Mucosa of descending colon (tissue), 3 donors: ENCODE measurements at regions of chr15 and their contacts with region 1.

Region 1: DNA sequence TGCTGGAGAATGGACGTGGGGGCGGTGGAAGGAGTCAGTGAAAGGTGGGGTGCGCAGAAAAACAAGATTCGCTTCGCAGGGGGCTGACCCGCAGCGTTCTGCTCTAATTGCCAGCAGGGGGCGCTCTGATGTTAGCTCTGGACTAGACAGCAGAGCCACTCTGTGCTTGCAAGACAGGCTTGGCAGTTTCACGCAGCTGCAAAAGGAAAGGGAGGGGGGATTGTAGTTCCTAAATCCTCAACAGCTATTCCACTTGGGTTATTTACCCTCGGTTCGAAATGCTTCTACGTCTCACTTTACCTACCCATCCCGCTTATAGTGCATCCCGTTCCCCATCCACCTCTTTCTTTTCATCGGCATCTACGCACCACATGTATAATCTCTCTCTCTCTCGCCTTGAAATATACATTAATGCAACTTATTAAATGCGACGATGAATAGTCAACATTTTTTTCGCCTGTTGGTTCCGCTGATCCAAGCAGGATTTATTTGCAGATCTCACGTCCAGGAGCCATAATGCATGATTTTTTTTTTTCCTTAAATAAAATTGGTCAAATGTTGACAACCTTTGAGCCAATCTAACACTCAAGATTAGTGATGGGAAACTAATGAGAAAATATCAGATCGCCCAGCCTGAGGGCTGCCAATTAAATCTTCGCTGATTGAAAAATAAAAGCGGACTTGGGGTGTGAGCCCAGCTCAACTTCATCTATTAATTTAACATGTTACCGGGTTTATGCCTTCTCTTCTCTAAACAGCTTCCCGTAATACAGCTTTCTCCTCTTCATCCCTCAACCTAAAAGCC is 216.4 kb downstream of the MEIS2 start:
- DNase-seq: peak; percentile 69 to 88 (median 79)
- ATAC-seq: peak; percentile 85
- H3K4me3 ChIP-seq: no peak overlapping the region
- H3K4me1 ChIP-seq: peaks cover 4% of the 10 kb centered on the region
- CTCF ChIP-seq: peak; percentile 47

Region 2: DNA sequence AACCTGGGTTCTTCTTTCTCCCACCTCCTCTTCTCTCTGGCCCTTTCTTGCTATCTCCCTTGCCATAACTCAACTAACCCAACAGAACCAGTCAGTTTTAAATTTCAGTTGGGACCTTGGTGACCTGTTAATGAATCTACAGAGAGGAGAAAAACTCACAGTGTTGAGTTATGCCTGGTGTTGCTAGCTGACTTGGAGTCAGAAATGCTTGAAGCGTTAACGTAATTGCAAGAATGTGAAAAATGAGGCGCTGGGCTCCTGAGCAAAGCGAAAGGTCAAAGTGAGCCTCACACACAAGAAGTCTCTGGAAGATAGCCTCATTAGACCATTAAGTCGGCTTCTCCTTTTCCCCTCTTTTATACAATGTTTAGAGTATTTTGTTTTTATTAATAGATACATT is 198.1 kb after region 1 on chr15:
- intact Hi-C with region 1: no loop called
- DNase-seq: no peak
- ATAC-seq: no peak
- H3K4me3 ChIP-seq: no peak overlapping the region
- H3K4me1 ChIP-seq: no peaks in the 10 kb centered on the region
- CTCF ChIP-seq: no peak

Region 3: GRCh38 chr15:37100109-37100965 is 216.4 kb after region 1 on chr15 and contains the start of gene MEIS2:
- intact Hi-C with region 1: loop called (anchors 5 to 10 kb)
- DNase-seq: peak; percentile 77 to 89 (median 80)
- ATAC-seq: peak; percentile 80
- H3K4me3 ChIP-seq: peak within 1 kb of the TSS; percentile 30
- H3K4me1 ChIP-seq: peaks cover 6% of the 10 kb centered on the region
- CTCF ChIP-seq: no peak
- total RNA-seq, gene MEIS2: 3.8 to 93.3 (median 8.9) TPM

Region 4: GRCh38 chr15:37106490-37107001 is 222.6 kb after region 1 on chr15:
- intact Hi-C with region 1: loop called (anchors 5 to 10 kb)
- DNase-seq: peak in 1 of 3 donors; percentile 50
- ATAC-seq: no peak
- H3K4me3 ChIP-seq: no peak overlapping the region
- H3K4me1 ChIP-seq: peaks cover 9% of the 10 kb centered on the region
- CTCF ChIP-seq: no peak

Region 5: GRCh38 chr15:37134699-37135131 is 250.8 kb after region 1 on chr15:
- intact Hi-C with region 1: loop called (anchors 5 to 10 kb)
- DNase-seq: peak in 1 of 3 donors; percentile 27
- ATAC-seq: no peak
- H3K4me3 ChIP-seq: no peak overlapping the region
- H3K4me1 ChIP-seq: no peaks in the 10 kb centered on the region
- CTCF ChIP-seq: no peak